Cardiac septum (tissue), 1 donor: ENCODE measurements at regions of chr15 and their contacts with region 1.

Region 1: DNA sequence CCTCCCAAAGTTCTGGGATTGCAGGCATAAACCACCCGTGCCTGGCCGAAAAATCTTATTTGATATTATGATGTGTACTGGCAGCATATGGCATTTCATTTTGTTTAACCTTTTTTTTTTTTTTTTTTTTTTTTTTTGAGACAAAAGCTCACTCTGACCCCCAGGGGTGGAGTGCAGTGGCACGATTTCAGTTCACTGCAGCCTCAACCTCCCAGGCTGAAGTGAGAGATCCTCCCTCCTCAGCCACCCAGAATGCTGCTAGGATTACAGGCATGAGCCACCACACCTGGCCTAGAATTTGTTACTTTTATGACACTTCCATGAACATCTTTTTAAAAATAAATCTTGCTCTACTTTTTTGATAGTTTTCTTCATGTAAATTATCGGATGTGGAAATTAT is 12.0 kb downstream of the TERB2 start:
- DNase-seq: no peak

Region 2: GRCh38 chr15:44861439-44861910 is 107.0 kb before region 1 on chr15:
- intact Hi-C with region 1: no loop called
- DNase-seq: no peak

Region 3: GRCh38 chr15:44882499-44882968 is 85.9 kb before region 1 on chr15:
- intact Hi-C with region 1: no loop called
- DNase-seq: no peak

Region 4: DNA sequence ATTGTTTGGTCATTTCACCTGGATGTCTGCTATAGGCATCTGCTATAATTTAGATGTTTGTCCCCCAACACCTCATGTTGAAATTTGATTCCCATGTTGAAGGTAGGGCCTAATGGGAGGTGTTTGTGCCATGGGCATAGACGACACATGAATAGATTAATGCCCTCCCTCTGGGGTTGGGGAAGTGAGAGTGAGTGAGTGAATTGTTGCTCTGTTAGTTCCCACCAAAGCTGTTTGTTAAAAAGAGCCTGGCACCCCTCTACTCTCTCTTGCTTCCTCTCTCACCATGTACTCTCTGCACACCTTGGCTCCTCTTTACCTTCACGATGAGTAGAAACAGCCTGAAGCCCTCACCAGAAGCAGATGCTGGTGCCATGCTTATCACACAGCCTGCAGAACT is 30.6 kb after region 1 on chr15:
- intact Hi-C with region 1: no loop called
- DNase-seq: no peak

Region 5: DNA sequence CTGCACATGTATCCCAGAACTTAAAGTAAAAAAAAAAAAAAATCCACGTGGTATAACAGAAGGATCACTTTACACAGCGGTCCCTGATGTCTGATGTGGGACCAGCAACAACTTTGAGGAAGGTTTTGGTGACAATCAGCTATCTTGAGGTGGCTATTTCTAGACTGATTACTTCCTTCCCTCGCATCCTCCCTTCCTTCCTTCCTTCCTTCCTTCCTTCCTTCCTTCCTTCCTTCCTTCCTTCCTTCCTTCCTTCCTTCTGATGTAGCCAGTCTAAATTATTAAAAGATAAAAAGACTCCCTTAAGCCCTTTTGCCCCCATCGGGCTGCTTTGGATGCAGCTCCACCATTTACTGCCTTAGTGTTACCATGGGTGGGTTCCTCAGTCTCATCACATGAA is 69.5 kb after region 1 on chr15:
- intact Hi-C with region 1: loop called (anchors 5 kb)
- DNase-seq: no peak